ENCODE measurements at regions of chr15 and their contacts with region 1.

Region 1: DNA sequence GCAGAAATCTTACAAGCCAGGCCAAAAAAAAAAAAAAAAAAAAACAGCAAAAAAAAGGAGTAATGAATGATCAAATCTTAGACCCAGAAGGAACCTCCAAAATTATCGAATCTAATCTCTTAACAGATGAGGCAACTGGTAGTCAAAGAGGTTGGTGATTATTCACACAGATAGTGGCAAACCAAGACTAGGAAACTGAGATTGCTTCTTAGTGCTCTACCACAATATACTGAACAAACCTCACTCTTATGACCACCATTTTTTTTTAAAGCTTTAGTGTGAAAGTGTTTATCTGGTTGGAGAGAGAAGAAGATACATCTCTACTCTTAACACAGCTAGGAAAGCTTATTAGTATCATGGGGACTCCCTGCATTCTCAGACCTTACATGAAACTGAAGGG is 17.3 kb downstream of the ATOSA start:
- DNase-seq: no peak
- CTCF ChIP-seq: no peak

Region 2: GRCh38 chr15:52466134-52466701 is 195.7 kb before region 1 on chr15:
- CTCF ChIA-PET with region 1: no interaction called
- POLR2A ChIA-PET with region 1: no interaction called
- DNase-seq: peak; percentile 89
- CTCF ChIP-seq: peak; percentile 48

Region 3: GRCh38 chr15:52651868-52652267 is 10.0 kb before region 1 on chr15:
- CTCF ChIA-PET with region 1: interaction called, 15 read pairs
- POLR2A ChIA-PET with region 1: no interaction called
- DNase-seq: peak; percentile 32
- CTCF ChIP-seq: no peak

Region 4: DNA sequence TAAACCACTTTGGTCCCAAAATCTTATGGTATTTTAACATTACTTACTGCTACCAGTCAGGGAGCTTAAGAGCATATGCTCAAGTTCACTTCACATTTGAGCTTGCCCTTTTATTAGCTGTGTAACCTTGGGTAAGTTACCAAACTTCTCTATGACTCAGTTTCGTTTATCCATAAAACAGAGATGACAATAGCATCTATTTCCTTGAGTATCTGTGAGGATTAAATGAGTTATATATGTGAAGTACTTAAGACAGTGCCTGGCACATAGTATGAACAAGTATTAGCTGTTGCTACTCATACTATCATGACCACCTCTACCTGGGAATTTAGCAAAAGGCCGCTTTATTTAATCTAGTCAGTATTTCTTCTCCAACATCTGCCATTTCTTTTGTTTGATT is 11.4 kb after region 1 on chr15:
- CTCF ChIA-PET with region 1: interaction called, 16 read pairs
- POLR2A ChIA-PET with region 1: no interaction called
- DNase-seq: no peak
- CTCF ChIP-seq: no peak

Measured in GM10248 (cell line).